ENCODE measurements at regions of chr4 and their contacts with region 1.

Region 1: GRCh38 chr4:39638354-39639240 is at the start of gene SMIM14:
- DNase-seq: peak; percentile 99
- H3K4me3 ChIP-seq: peak within 1 kb of the TSS; percentile 94
- H3K27ac ChIP-seq: peak within 1 kb of the TSS; percentile 96 to 98
- H3K4me1 ChIP-seq: peaks cover 3% of the 10 kb centered on the region
- H3K27me3 ChIP-seq: no peaks in the 10 kb centered on the region
- CTCF ChIP-seq: peak in 2 of 3 donors; percentile 41 to 66
- EP300 ChIP-seq: peak; percentile 87
- POLR2A ChIP-seq: peak; percentile 88
- total RNA-seq, gene SMIM14: 27.0 to 63.1 (median 56.9) TPM

Region 2: DNA sequence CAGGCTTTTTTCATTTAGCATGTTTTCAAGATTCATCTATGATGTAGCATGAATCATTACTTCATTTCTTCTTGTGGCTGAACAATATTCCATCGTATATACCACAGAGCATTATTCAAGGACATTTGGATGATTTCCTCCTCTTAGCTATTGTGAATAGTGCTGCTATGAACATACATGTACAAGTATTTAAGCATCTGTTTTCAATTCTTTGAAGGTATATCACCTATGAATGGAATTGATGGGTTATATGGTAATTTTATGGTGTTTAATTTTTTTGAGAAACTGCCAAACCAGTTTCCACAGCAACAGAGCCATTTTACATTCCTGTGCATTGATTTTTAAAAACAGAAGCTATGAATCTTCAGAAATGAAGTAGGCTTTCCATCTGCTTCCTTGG is 492.4 kb before region 1 on chr4:
- intact Hi-C with region 1: no loop called
- DNase-seq: no peak
- H3K4me3 ChIP-seq: no peak overlapping the region
- H3K27ac ChIP-seq: no peak overlapping the region
- H3K4me1 ChIP-seq: no peaks in the 10 kb centered on the region
- H3K27me3 ChIP-seq: no peaks in the 10 kb centered on the region
- CTCF ChIP-seq: no peak
- EP300 ChIP-seq: no peak
- POLR2A ChIP-seq: no peak

Region 3: GRCh38 chr4:39458505-39459300 is 179.9 kb before region 1 on chr4 and contains the starts of genes LIAS and RPL9:
- intact Hi-C with region 1: loop called in 1 of 4 experiments (anchors 5 kb)
- DNase-seq: peak; percentile 97 to 98 (median 97)
- H3K4me3 ChIP-seq: peak within 1 kb of the TSS; percentile 76
- H3K27ac ChIP-seq: peak within 1 kb of the TSS; percentile 85 to 90
- H3K4me1 ChIP-seq: peaks cover 3% of the 10 kb centered on the region
- H3K27me3 ChIP-seq: no peaks in the 10 kb centered on the region
- CTCF ChIP-seq: peak in 1 of 3 donors; percentile 24
- EP300 ChIP-seq: peak; percentile 47
- POLR2A ChIP-seq: peak; percentile 98
- total RNA-seq, gene LIAS: 12.7 to 22.2 (median 15.6) TPM
- total RNA-seq, gene RPL9: 2,988 to 22,039 (median 3,954) TPM

Region 4: DNA sequence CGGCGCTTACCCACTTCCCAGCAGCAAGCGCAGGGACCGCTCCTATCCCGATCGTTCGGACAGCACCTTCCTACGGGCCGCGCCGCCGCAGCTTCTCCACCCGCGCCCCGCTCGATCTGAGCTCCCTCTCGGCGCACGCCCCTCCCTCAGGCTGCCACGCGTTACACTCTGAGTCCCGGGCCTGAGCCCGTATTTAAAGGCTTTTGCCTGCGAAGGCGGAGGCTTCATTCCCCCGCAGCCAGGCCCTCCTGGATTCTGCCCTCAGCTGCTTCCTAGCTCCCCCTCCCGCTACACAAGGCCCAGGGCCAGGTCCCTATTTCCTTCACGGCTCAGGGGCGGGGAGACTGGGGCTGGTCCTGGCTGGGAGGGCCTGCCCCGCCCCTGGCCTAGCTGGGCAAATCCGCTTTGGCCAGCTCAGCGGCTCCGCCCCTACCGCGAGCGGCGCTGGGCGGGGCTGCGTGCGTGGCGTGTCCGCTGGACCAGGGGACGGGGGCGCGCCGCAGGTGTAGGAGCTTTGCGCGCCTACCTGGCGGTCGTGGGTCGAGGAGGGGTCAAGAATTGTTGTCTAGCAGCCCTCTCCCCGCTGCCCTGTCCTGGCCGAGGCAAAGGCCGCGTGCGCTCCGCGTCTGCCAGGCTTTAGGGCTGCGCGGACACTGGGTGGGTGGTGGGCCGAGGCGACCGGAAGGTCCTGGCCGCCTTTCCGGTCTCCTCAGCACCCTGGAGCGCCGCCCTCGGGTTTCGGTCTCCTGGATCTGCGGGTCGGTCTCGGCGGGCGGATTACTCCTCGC is 111.1 kb before region 1 on chr4 and contains the start of gene UGDH:
- intact Hi-C with region 1: loop called (anchors 2 to 10 kb)
- DNase-seq: peak; percentile 97 to 98 (median 98)
- H3K4me3 ChIP-seq: peak within 1 kb of the TSS; percentile 79
- H3K27ac ChIP-seq: peak within 1 kb of the TSS; percentile 89 to 95
- H3K4me1 ChIP-seq: peaks cover 7% of the 10 kb centered on the region
- H3K27me3 ChIP-seq: no peaks in the 10 kb centered on the region
- CTCF ChIP-seq: peak in 2 of 3 donors; percentile 19 to 30
- EP300 ChIP-seq: peak; percentile 4
- POLR2A ChIP-seq: peak; percentile 98
- total RNA-seq, gene UGDH: 47.2 to 106 (median 70.1) TPM

Region 5: GRCh38 chr4:39591290-39591689 is 47.3 kb before region 1 on chr4:
- intact Hi-C with region 1: no loop called
- DNase-seq: no peak
- H3K4me3 ChIP-seq: no peak overlapping the region
- H3K27ac ChIP-seq: no peak overlapping the region
- H3K4me1 ChIP-seq: no peaks in the 10 kb centered on the region
- H3K27me3 ChIP-seq: no peaks in the 10 kb centered on the region
- CTCF ChIP-seq: no peak
- EP300 ChIP-seq: no peak
- POLR2A ChIP-seq: no peak

Region 6: GRCh38 chr4:39846120-39846519 is 207.5 kb after region 1 on chr4:
- intact Hi-C with region 1: no loop called
- DNase-seq: no peak
- H3K4me3 ChIP-seq: no peak overlapping the region
- H3K27ac ChIP-seq: no peak overlapping the region
- H3K4me1 ChIP-seq: no peaks in the 10 kb centered on the region
- H3K27me3 ChIP-seq: no peaks in the 10 kb centered on the region
- CTCF ChIP-seq: no peak
- EP300 ChIP-seq: no peak
- POLR2A ChIP-seq: no peak

Region 7: DNA sequence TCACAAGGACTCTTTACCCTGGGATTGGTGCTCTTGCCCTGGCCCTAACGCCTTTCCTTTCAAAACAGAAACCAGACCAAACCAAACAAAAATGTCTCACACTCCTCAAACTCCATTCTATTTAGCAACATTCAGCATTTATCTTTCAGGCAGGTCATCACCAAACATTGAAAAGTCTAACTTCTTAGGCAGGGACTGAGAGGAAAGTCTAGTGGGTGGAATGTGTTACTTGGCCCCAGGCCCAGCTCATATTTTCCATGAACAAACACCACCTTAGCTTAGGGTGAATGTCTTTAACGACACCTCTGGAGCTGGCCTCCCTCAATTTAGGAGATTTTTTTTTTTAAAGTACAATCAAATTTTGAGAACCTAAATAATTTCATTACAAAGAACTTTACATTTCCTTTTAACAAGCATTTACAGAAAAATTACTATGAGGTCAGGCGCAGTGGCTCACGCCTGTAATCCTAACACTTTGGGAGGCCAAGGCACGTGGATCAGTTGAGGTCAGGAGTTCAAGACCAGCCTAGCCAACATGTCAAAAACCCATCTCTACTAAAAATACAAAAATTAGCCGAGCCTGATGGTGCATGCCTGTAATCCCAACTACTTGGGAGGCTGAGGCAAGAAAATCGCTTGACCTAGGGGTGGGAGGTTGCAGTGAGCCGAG is 407.8 kb after region 1 on chr4:
- intact Hi-C with region 1: no loop called
- DNase-seq: peak in 3 of 5 donors; percentile 19 to 53 (median 38)
- H3K4me3 ChIP-seq: no peak overlapping the region
- H3K27ac ChIP-seq: no peak overlapping the region
- H3K4me1 ChIP-seq: no peaks in the 10 kb centered on the region
- H3K27me3 ChIP-seq: no peaks in the 10 kb centered on the region
- CTCF ChIP-seq: no peak
- EP300 ChIP-seq: no peak
- POLR2A ChIP-seq: no peak

Measured in ovary (tissue), 10 donors.